PC-3 (cell line): ENCODE measurements at regions of chr17 and their contacts with region 1.

Region 1: DNA sequence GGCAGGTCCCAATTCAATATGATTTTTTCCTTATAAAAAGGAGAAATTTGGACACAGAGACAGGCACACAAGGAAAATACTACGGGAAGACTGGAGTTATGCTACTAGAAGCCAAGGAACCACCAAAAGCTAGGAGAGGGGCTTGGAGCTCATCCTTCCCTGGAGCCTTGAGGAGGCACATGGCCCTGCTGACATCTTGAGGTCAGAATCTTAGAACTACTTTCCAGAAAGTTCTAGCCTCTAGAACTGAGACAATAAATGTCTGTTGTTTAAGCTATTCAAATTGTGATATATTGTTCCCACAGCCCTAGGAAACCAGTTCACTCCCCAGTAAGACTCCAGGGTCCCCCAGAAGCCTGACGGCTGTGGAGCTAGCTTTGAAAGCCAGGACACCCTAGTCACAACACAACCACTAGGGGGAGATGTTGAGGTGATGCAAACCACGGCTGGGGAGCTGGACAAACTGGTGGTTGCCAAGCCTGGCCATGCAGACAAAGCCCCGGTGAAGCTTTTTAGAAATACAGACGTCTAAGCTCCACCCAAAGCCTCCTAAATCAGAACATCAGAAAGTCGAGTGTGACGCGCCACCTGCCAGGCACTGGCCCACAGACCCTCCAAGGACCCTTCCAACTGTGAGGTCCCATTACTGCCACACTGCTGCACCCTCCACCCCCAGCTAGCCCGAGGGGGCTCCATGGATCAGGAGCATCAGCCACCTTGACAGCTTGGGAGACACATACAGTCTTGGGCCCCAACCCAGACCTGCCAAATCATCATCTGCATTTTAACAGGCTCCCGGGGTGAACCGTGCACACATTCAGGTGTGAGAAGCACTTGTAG is 106.4 kb downstream of the SLC39A11 start:
- DNase-seq: peak; percentile 88
- ATAC-seq: peak; percentile 57
- H3K4me3 ChIP-seq: no peak overlapping the region
- H3K27ac ChIP-seq: no peak overlapping the region
- H3K4me1 ChIP-seq: peaks cover 25% of the 10 kb centered on the region
- H3K27me3 ChIP-seq: no peaks in the 10 kb centered on the region
- CTCF ChIP-seq: peak; percentile 98

Region 2: DNA sequence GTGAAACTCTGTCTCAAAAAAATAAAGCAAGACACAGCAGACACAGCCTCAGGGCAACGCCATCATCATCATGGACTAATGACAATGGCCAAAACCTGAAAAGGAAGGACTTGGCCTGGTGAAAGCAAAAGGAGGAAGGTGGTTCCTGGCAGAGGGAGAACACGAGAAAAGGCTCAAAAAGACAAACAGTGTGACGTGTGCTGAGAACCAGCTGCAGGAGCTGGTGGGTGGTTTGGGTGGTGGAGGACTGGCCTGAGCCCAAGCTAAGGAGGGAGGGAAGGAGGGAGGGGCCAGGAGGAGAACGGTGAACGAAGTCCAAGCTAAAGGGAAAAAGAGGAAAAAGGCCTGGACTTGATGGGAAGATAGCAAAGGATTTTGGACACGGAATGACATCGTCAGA is 21.3 kb after region 1 on chr17:
- CTCF ChIA-PET with region 1: no interaction called
- POLR2A ChIA-PET with region 1: no interaction called
- intact Hi-C with region 1: loop called (anchors 2 kb)
- DNase-seq: no peak
- ATAC-seq: no peak
- H3K4me3 ChIP-seq: no peak overlapping the region
- H3K27ac ChIP-seq: no peak overlapping the region
- H3K4me1 ChIP-seq: peaks cover 7% of the 10 kb centered on the region
- H3K27me3 ChIP-seq: no peaks in the 10 kb centered on the region
- CTCF ChIP-seq: no peak